Endothelial cell of umbilical vein (primary cell): ENCODE measurements at regions of chr6 and their contacts with region 1.

Region 1: GRCh38 chr6:155174576-155175211 is 89.1 kb upstream of the CLDN20 start:
- DNase-seq: peak; percentile 86
- H3K4me3 ChIP-seq: no peak overlapping the region
- H3K27ac ChIP-seq: peak overlapping the region; percentile 7
- H3K4me1 ChIP-seq: peaks cover 32% of the 10 kb centered on the region
- H3K27me3 ChIP-seq: no peaks in the 10 kb centered on the region
- CTCF ChIP-seq: peak; percentile 64 to 73
- POLR2A ChIP-seq: no peak

Region 2: GRCh38 chr6:154156135-154156896 is 1018.4 kb before region 1 on chr6:
- CTCF ChIA-PET with region 1: interaction called, 3 read pairs
- POLR2A ChIA-PET with region 1: no interaction called
- dilution Hi-C with region 1: no loop called
- intact Hi-C with region 1: loop called (anchors 10 kb)
- DNase-seq: peak; percentile 46
- H3K4me3 ChIP-seq: no peak overlapping the region
- H3K27ac ChIP-seq: no peak overlapping the region
- H3K4me1 ChIP-seq: no peaks in the 10 kb centered on the region
- H3K27me3 ChIP-seq: no peaks in the 10 kb centered on the region
- CTCF ChIP-seq: peak; percentile 68 to 81
- POLR2A ChIP-seq: no peak

Region 3: GRCh38 chr6:154868143-154868594 is 306.5 kb before region 1 on chr6:
- CTCF ChIA-PET with region 1: interaction called, 51 read pairs
- POLR2A ChIA-PET with region 1: no interaction called
- dilution Hi-C with region 1: no loop called
- intact Hi-C with region 1: loop called (anchors 1 kb)
- DNase-seq: peak; percentile 57
- H3K4me3 ChIP-seq: no peak overlapping the region
- H3K27ac ChIP-seq: no peak overlapping the region
- H3K4me1 ChIP-seq: no peaks in the 10 kb centered on the region
- H3K27me3 ChIP-seq: no peaks in the 10 kb centered on the region
- CTCF ChIP-seq: peak; percentile 53 to 54
- POLR2A ChIP-seq: no peak

Region 4: GRCh38 chr6:155013457-155013876 is 161.2 kb before region 1 on chr6:
- CTCF ChIA-PET with region 1: interaction called, 6 read pairs
- POLR2A ChIA-PET with region 1: no interaction called
- dilution Hi-C with region 1: no loop called
- intact Hi-C with region 1: loop called (anchors 1 kb)
- DNase-seq: peak; percentile 89
- H3K4me3 ChIP-seq: peak overlapping the region in 2 of 3 experiments; percentile 39 to 65
- H3K27ac ChIP-seq: peak overlapping the region; percentile 41
- H3K4me1 ChIP-seq: peaks cover 25% of the 10 kb centered on the region
- H3K27me3 ChIP-seq: no peaks in the 10 kb centered on the region
- CTCF ChIP-seq: no peak
- POLR2A ChIP-seq: no peak

Region 5: DNA sequence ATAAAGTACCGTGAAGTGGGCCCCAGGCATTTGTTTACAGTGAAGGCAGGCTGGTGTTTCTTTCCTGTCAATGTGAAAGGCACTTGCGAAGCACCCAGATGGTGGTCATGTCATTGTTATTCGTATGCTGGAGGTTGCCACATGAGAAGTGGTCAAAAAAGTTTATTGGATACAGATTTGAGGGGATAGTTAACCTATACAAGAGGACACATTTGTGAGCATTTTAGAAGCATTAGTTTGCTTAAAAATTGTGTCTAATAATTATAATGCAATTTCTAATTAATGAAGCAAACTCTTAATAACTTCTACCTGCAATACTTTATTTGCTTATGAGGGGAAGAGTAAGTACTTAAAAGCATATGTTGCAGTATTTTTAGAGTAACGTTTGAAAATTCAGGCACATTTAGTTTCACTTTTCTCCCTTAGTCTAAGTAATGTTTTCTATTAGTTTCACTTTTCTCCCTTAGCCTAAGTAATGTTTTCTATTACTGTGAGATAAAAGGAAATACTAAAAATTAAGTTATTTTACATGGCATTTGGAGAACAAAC is 31.6 kb before region 1 on chr6:
- CTCF ChIA-PET with region 1: interaction called, 4 read pairs
- POLR2A ChIA-PET with region 1: no interaction called
- dilution Hi-C with region 1: no loop called
- intact Hi-C with region 1: loop called (anchors 1 kb)
- DNase-seq: no peak
- H3K4me3 ChIP-seq: peak overlapping the region in 2 of 3 experiments; percentile 15 to 62
- H3K27ac ChIP-seq: peak overlapping the region; percentile 79
- H3K4me1 ChIP-seq: peaks cover 37% of the 10 kb centered on the region
- H3K27me3 ChIP-seq: no peaks in the 10 kb centered on the region
- CTCF ChIP-seq: no peak
- POLR2A ChIP-seq: no peak

Region 6: DNA sequence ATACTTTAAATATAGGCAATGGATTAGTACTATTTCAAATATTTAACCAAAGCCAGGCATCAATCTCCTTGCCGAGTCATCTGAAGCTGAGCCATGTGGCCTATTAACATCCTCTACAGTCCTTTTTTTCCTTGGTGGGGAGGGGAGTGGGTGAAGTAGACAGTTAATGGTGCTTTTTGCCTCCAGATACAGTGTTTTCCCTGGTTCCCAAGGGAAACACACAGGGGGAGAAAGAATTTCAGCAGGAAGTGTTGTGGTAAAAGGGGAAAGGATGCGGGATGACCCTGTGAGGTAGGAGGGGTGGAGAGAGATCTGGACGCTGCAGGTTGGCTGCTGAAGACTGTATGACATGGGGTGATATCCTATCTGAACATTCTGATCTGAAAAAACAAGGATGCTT is 98.7 kb after region 1 on chr6:
- CTCF ChIA-PET with region 1: interaction called, 12 read pairs
- POLR2A ChIA-PET with region 1: no interaction called
- dilution Hi-C with region 1: no loop called
- intact Hi-C with region 1: loop called (anchors 1 kb)
- DNase-seq: peak; percentile 88
- H3K4me3 ChIP-seq: no peak overlapping the region
- H3K27ac ChIP-seq: peak overlapping the region; percentile 97
- H3K4me1 ChIP-seq: peaks cover 41% of the 10 kb centered on the region
- H3K27me3 ChIP-seq: no peaks in the 10 kb centered on the region
- CTCF ChIP-seq: no peak
- POLR2A ChIP-seq: no peak

Region 7: DNA sequence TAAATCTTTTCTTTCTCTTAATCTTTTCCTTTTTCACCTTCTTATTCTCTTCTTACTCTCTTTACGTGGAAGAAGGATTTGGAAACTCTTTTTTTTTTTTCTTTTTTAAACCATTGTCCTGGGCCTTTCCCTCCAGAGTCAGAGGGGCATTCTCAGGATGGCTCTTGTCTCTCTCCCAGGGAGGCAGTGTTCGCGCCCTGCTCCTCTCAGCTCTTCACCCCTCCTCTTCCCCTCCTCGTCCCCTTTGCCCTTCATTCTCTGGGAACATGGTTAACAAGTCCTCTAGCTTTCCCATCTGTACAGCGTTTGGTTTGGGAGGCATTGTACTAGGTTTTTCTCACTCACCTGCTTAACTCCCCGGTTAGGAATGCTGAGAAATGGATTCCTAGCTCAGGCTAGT is 191.6 kb after region 1 on chr6:
- CTCF ChIA-PET with region 1: no interaction called
- POLR2A ChIA-PET with region 1: no interaction called
- dilution Hi-C with region 1: no loop called
- intact Hi-C with region 1: no loop called
- DNase-seq: no peak
- H3K4me3 ChIP-seq: no peak overlapping the region
- H3K27ac ChIP-seq: no peak overlapping the region
- H3K4me1 ChIP-seq: no peaks in the 10 kb centered on the region
- H3K27me3 ChIP-seq: peaks cover 0 to 5% of the 10 kb centered on the region in 2 experiments
- CTCF ChIP-seq: no peak
- POLR2A ChIP-seq: no peak

Region 8: GRCh38 chr6:155882527-155883333 is 708.0 kb after region 1 on chr6:
- CTCF ChIA-PET with region 1: no interaction called
- POLR2A ChIA-PET with region 1: no interaction called
- dilution Hi-C with region 1: no loop called
- intact Hi-C with region 1: no loop called
- DNase-seq: peak; percentile 60
- H3K4me3 ChIP-seq: no peak overlapping the region
- H3K27ac ChIP-seq: peak overlapping the region; percentile 53
- H3K4me1 ChIP-seq: peaks cover 43% of the 10 kb centered on the region
- H3K27me3 ChIP-seq: no peaks in the 10 kb centered on the region
- CTCF ChIP-seq: no peak
- POLR2A ChIP-seq: no peak